Activated naive CD4-positive, alpha-beta T cell treated with anti-CD3 and anti-CD28 coated beads for 36 hours (primary cell): ENCODE measurements at regions of chr10 and their contacts with region 1.

Region 1: DNA sequence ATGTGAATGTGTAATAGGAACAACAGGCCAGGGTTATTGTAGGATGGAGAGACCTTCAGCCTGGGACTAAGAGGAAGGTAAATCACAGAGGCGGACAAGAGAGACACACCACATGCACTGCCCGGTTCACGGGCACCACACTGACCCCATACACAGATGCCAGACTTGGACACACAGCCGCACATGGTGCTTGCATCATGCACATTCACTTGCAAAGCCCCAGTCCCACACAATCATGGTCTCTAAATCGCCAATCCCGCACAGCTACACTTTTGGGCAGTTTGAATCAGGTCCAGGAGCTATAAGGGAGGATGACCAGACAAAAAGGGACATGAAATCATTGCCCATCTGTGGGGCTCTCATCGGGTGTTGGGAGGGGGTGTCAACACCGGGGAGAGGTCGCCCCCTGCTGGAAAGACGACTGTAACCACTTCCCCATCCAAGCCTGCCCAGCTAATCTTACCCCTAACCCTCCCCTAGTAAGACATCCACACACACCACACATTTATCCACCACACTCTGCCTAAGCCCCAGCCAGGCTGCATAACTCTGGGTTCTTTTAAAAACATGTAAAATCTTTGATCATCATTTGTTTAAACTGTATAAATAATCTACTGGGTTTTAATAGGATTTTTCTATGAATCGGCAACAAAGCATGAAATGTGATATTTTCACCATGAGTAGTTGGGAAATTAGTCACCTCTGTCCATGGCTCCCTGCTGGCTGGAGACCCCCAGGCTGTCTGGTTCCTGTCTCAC is 40.5 kb upstream of the SLF2 start:
- DNase-seq: peak; percentile 82
- H3K4me3 Mint-ChIP-seq: no peak overlapping the region
- H3K27ac Mint-ChIP-seq: no peak overlapping the region
- H3K4me1 Mint-ChIP-seq: no peaks in the 10 kb centered on the region
- H3K27me3 Mint-ChIP-seq: peaks cover 11% of the 10 kb centered on the region

Region 2: DNA sequence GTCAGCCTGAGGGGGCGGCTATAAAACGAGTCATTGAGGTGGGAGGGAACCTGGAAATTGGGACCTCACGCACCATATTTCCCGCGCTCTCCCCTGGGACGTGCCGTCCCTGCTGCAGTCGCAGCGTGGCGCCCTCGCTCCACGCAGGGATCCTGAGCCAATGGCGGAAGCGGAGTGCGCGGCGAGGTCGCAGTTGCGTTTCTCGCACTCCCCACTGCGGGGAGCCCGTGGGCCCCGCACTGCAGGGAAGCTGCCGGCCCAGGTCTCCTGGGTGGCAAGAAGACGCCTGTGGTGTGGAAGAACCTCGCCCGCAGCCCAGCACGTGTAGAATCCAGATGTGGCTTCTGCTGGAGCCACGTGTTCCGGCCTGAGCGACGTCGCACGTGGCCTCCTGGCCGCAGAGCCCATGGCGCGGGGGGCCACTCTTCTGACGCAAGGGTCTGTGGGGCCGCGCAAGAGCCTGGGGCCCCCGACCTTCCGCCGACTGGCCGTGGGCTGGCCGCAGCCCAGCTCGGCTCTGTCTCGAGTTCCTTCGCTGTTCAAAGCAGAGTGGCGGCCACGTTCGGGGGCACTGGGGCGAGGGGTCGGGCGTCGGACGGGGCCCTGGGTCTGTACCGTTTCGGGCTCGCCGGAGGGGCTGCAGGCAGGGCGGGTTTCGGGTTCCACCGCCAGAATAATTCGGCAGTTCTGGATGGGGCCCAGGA is 310.1 kb before region 1 on chr10:
- CTCF ChIA-PET with region 1: interaction called, 21 read pairs
- intact Hi-C with region 1: loop called (anchors 1 kb)
- DNase-seq: peak; percentile 85
- H3K4me3 Mint-ChIP-seq: no peak overlapping the region
- H3K27ac Mint-ChIP-seq: no peak overlapping the region
- H3K4me1 Mint-ChIP-seq: peaks cover 9% of the 10 kb centered on the region
- H3K27me3 Mint-ChIP-seq: peaks cover 20% of the 10 kb centered on the region

Region 3: GRCh38 chr10:100670828-100671479 is 201.3 kb before region 1 on chr10:
- CTCF ChIA-PET with region 1: no interaction called
- intact Hi-C with region 1: loop called (anchors 2 kb)
- DNase-seq: peak; percentile 67
- H3K4me3 Mint-ChIP-seq: no peak overlapping the region
- H3K27ac Mint-ChIP-seq: no peak overlapping the region
- H3K4me1 Mint-ChIP-seq: peaks cover 6% of the 10 kb centered on the region
- H3K27me3 Mint-ChIP-seq: peaks cover 58% of the 10 kb centered on the region

Region 4: GRCh38 chr10:100728928-100729861 is 143.0 kb before region 1 on chr10:
- CTCF ChIA-PET with region 1: no interaction called
- intact Hi-C with region 1: loop called (anchors 1 kb)
- DNase-seq: peak; percentile 65
- H3K4me3 Mint-ChIP-seq: peak overlapping the region; percentile 22
- H3K27ac Mint-ChIP-seq: no peak overlapping the region
- H3K4me1 Mint-ChIP-seq: peaks cover 21% of the 10 kb centered on the region
- H3K27me3 Mint-ChIP-seq: peaks cover 80% of the 10 kb centered on the region

Region 5: GRCh38 chr10:100827819-100828737 is 44.1 kb before region 1 on chr10:
- CTCF ChIA-PET with region 1: interaction called, 3 read pairs
- intact Hi-C with region 1: loop called (anchors 5 kb)
- DNase-seq: peak; percentile 50
- H3K4me3 Mint-ChIP-seq: peak overlapping the region; percentile 66
- H3K27ac Mint-ChIP-seq: no peak overlapping the region
- H3K4me1 Mint-ChIP-seq: peaks cover 19% of the 10 kb centered on the region
- H3K27me3 Mint-ChIP-seq: peaks cover 74% of the 10 kb centered on the region

Region 6: GRCh38 chr10:100888796-100889356 is 16.7 kb after region 1 on chr10:
- CTCF ChIA-PET with region 1: interaction called, 13 read pairs
- intact Hi-C with region 1: no loop called
- DNase-seq: no peak
- H3K4me3 Mint-ChIP-seq: no peak overlapping the region
- H3K27ac Mint-ChIP-seq: no peak overlapping the region
- H3K4me1 Mint-ChIP-seq: no peaks in the 10 kb centered on the region
- H3K27me3 Mint-ChIP-seq: peaks cover 12% of the 10 kb centered on the region